Activated CD8-positive, alpha-beta T cell treated with anti-CD3 and anti-CD28 coated beads for 36 hours (primary cell): ENCODE measurements at regions of chr5 and their contacts with region 1.

Region 1: GRCh38 chr5:160199410-160199911 is 29.8 kb upstream of the FABP6 start:
- DNase-seq: peak; percentile 73
- ATAC-seq: peak; percentile 100
- H3K4me3 Mint-ChIP-seq: peak overlapping the region; percentile 58
- H3K27ac Mint-ChIP-seq: no peak overlapping the region
- H3K4me1 Mint-ChIP-seq: peaks cover 6% of the 10 kb centered on the region
- H3K27me3 Mint-ChIP-seq: peaks cover 4% of the 10 kb centered on the region
- CTCF ChIP-seq: peak; percentile 84

Region 2: DNA sequence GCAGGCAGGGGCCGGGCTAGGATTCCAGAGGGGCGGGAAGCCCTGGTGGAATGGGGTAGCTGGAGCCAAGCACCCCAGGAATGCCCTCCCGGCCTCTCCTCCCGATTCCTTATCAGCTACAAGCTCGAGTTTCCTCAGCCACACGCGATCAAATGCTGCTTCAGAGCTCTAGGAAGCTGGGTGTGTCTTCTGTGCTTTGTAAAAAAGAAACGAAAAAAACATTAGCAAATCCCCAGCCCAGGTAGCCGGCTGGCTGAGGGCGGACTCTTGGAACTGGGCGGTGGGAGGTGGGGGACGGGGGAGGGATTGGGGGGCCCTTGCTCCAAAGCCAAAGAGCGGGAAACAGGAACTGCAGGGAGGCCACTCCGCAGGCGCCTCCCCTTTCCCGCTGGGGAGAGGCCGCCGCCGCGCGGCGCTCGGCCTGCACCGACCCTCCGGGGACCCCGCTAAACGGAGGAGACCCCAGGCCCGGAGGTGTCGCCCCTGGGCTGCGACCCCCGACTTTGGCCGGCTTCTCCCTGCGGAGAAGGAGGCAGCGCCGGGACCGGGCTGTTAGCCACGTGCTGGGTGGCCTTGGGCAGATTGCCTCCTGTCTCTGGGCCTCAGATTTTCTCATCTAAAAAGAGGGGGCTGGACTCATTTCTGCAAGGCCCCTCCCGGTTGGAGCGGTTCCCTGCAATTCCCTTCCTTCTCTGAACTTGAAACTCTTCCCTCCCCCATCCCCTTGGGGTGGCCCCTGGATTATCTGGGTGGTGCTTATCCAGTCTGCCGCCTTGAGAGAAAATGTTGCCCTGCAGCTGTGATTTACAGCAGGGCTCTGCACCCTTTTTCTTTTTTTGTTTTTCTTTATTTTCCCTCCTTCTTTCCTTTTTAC is 11.1 kb before region 1 on chr5:
- CTCF ChIA-PET with region 1: interaction called, 10 read pairs
- POLR2A ChIA-PET with region 1: no interaction called
- intact Hi-C with region 1: no loop called
- DNase-seq: no peak
- ATAC-seq: peak; percentile 30
- H3K4me3 Mint-ChIP-seq: no peak overlapping the region
- H3K27ac Mint-ChIP-seq: no peak overlapping the region
- H3K4me1 Mint-ChIP-seq: peaks cover 2% of the 10 kb centered on the region
- H3K27me3 Mint-ChIP-seq: peaks cover 20% of the 10 kb centered on the region
- CTCF ChIP-seq: no peak

Region 3: DNA sequence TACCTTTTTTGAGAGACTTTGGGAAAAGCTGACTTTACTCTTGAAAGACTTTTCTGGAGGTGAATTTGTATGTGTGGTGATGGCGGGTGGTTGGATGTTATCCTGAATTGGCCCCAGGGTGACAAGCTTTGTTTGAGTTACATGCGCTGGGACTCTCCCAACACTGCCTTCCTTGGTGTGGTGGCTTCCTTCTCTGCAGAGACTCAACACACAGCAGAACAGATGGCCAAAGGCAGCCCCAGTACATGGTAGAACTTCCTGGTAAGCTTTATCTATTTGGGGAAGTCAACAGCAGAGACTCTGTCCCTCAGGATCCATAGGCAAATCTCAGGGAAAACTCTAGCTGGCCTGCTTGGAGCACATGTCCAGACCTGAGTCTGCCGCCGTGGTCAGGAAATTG is 152.8 kb after region 1 on chr5:
- CTCF ChIA-PET with region 1: interaction called, 119 read pairs
- POLR2A ChIA-PET with region 1: no interaction called
- intact Hi-C with region 1: no loop called
- DNase-seq: no peak
- ATAC-seq: no peak
- H3K4me3 Mint-ChIP-seq: no peak overlapping the region
- H3K27ac Mint-ChIP-seq: no peak overlapping the region
- H3K4me1 Mint-ChIP-seq: no peaks in the 10 kb centered on the region
- H3K27me3 Mint-ChIP-seq: no peaks in the 10 kb centered on the region
- CTCF ChIP-seq: no peak